ENCODE measurements at regions of chr1 and their contacts with region 1.

Region 1: GRCh38 chr1:110630839-110631663 is 24.9 kb upstream of the KCNA2 start:
- DNase-seq: peak; percentile 72
- ATAC-seq: peak; percentile 73
- H3K4me3 Mint-ChIP-seq: no peak overlapping the region
- H3K27ac Mint-ChIP-seq: no peak overlapping the region
- H3K4me1 Mint-ChIP-seq: peaks cover 46% of the 10 kb centered on the region
- H3K27me3 Mint-ChIP-seq: no peaks in the 10 kb centered on the region
- CTCF ChIP-seq: peak; percentile 82

Region 2: GRCh38 chr1:110645821-110646735 is 15.0 kb after region 1 on chr1:
- CTCF ChIA-PET with region 1: interaction called, 5 read pairs
- POLR2A ChIA-PET with region 1: interaction called, 3 read pairs
- intact Hi-C with region 1: loop called (anchors 1 kb)
- DNase-seq: no peak
- ATAC-seq: no peak
- H3K4me3 Mint-ChIP-seq: no peak overlapping the region
- H3K27ac Mint-ChIP-seq: no peak overlapping the region
- H3K4me1 Mint-ChIP-seq: peaks cover 15% of the 10 kb centered on the region
- H3K27me3 Mint-ChIP-seq: no peaks in the 10 kb centered on the region
- CTCF ChIP-seq: no peak

Region 3: DNA sequence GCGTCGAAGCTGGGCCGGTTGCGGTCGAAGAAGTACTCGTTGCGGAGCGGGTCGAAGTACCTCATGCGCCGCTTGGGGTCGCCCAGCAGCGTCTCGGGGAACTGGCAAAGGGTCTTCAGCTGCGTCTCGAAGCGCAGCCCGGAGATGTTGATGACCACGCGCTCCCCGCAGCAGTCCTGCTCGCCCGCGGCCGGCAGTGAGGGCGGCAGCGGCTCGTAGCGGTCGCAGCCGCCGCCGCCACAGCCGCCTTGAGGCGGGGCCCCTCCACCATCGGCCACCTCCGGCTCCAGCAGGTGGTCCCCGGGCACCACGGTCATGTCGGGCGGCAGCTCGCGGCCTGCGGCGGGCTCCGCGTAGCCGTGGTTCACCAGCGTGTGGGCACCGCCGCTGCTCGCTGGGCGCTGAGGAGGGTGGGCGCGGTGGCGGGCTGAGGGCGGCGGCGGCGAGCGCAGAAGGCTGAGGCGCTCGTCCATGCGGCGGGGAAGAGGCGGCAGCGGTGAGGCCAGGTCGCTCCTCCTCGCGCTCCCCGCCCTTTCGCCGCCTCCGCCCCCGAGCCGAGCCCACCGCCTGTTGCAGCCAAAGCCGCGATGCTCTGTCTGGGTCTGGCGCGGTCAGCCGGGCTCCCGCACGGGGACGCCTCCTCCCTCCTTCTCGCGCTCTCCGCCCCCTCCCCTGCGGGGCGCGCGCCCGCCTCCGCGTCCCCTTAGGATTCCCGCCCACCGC is 43.4 kb after region 1 on chr1 and contains the start of gene KCNA3:
- CTCF ChIA-PET with region 1: interaction called, 5 read pairs
- POLR2A ChIA-PET with region 1: interaction called, 29 read pairs
- intact Hi-C with region 1: loop called (anchors 1 kb)
- DNase-seq: peak; percentile 68
- ATAC-seq: peak; percentile 62
- H3K4me3 Mint-ChIP-seq: peak within 1 kb of the TSS; percentile 90
- H3K27ac Mint-ChIP-seq: peak within 1 kb of the TSS; percentile 80
- H3K4me1 Mint-ChIP-seq: peaks cover 60% of the 10 kb centered on the region
- H3K27me3 Mint-ChIP-seq: no peaks in the 10 kb centered on the region
- CTCF ChIP-seq: no peak
- total RNA-seq, gene KCNA3: 15.0 and 20.0 TPM in 2 replicates

Region 4: GRCh38 chr1:110686188-110686587 is 55.1 kb after region 1 on chr1:
- CTCF ChIA-PET with region 1: interaction called, 6 read pairs
- POLR2A ChIA-PET with region 1: interaction called, 3 read pairs
- intact Hi-C with region 1: loop called (anchors 1 kb)
- DNase-seq: no peak
- ATAC-seq: peak; percentile 56
- H3K4me3 Mint-ChIP-seq: no peak overlapping the region
- H3K27ac Mint-ChIP-seq: no peak overlapping the region
- H3K4me1 Mint-ChIP-seq: peaks cover 3% of the 10 kb centered on the region
- H3K27me3 Mint-ChIP-seq: no peaks in the 10 kb centered on the region
- CTCF ChIP-seq: no peak

Region 5: DNA sequence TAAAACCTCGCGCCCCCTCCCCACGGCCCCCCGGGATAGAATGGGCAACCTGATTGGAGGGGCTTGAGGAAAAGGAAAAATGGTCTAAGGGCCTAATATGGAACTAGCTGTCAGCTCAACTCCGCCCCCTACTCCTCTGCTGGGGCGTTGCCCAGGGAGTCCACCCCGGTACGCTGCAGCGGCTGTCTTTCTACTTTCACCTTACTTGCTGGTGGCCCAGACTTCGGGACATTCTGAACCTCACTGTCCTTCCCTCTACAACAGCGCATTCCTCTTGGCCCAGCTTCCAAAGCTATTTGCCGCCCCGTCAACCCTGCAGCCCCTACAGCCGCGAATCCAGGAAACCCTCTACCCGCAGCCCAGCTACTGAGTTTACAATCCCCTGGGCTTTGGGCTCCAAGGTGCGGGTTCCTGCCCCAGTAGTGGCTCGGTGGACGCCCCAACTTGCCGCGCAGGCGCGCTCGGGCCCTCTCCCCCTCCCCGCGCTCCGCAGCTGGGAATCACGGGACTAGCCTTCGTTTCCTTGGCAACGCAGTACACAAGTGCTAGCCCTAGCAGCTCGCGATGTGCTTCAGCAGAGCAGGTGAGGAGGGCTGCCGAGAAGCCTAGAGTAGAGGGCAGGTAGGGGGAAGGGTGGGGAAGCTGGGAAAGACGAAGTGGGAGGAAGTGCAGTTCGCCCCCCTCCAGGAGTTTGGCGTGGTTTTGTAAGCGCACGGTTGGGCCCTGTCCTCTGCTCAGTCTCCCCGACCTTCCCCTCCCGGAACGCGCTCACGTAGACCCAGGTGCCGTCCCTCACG is 715.2 kb after region 1 on chr1:
- CTCF ChIA-PET with region 1: no interaction called
- POLR2A ChIA-PET with region 1: no interaction called
- intact Hi-C with region 1: loop called (anchors 5 kb)
- DNase-seq: peak; percentile 82
- ATAC-seq: peak; percentile 88
- H3K4me3 Mint-ChIP-seq: peak overlapping the region; percentile 93
- H3K27ac Mint-ChIP-seq: peak overlapping the region; percentile 85
- H3K4me1 Mint-ChIP-seq: peaks cover 13% of the 10 kb centered on the region
- H3K27me3 Mint-ChIP-seq: no peaks in the 10 kb centered on the region
- CTCF ChIP-seq: no peak

Measured in activated B cell treated with CpG ODN at 0.5 μM for 24 hours (primary cell).